Caco-2 (cell line): ENCODE measurements at regions of chrX and their contacts with region 1.

Region 1: GRCh38 chrX:24741330-24741729 is 47.6 kb downstream of the POLA1 start:
- DNase-seq: no peak
- H3K4me3 ChIP-seq: no peak overlapping the region
- H3K4me3 Mint-ChIP-seq: no peak overlapping the region
- H3K27ac Mint-ChIP-seq: no peak overlapping the region
- H3K4me1 ChIP-seq: no peaks in the 10 kb centered on the region
- H3K4me1 Mint-ChIP-seq: no peaks in the 10 kb centered on the region
- H3K27me3 ChIP-seq: no peaks in the 10 kb centered on the region
- H3K27me3 Mint-ChIP-seq: no peaks in the 10 kb centered on the region
- CTCF ChIP-seq: no peak

Region 2: GRCh38 chrX:24515447-24515846 is 225.9 kb before region 1 on chrX:
- CTCF ChIA-PET with region 1: no interaction called
- POLR2A ChIA-PET with region 1: no interaction called
- intact Hi-C with region 1: loop called (anchors 5 kb)
- DNase-seq: peak in 1 of 2 experiments; percentile 7
- H3K4me3 ChIP-seq: no peak overlapping the region
- H3K4me3 Mint-ChIP-seq: no peak overlapping the region
- H3K27ac Mint-ChIP-seq: no peak overlapping the region
- H3K4me1 ChIP-seq: no peaks in the 10 kb centered on the region
- H3K4me1 Mint-ChIP-seq: no peaks in the 10 kb centered on the region
- H3K27me3 ChIP-seq: no peaks in the 10 kb centered on the region
- H3K27me3 Mint-ChIP-seq: no peaks in the 10 kb centered on the region
- CTCF ChIP-seq: peak in 1 of 2 experiments; percentile 42